GM12878 (cell line): ENCODE measurements at regions of chr18 and their contacts with region 1.

Region 1: DNA sequence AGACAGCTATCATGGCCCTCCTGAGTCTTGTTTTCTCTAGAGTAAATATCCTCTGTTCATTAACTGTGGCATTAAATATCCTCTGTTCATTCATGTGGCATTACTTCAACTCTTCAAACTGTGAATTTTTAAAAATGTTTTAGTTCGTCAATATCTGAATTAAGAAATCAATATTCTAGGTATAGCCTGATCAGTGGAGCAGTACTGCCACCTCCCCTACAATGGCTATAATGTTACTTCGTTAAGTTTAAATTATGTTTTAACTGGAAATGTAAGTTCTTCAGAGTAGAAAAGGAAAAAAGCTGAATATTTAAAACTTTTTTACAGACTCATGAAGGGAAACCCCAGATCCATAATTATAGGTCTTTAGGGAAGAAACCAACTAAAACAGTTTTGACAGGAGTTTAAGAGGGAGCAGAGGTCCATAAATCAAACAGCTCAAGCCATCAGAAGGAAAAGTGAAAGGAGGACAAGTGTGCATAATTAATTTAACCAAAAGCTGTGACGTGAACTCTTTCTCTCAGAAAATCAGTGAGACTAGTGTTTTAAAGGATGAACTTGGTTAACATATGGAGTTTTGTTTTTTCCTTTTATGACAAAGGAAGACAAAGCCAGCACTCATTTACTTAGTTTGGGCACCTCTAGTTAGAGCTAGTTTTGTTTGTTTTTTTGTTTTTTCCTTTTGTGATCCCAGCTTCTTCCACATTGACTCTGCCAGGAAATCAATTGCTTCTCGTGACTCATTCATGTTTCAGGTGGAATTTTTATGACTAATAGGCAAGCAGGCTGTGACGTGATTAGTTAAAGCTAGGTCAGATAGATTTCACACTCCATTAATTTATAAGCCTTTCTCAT is 44.9 kb downstream of the RBBP8 start:
- DNase-seq: no peak
- ATAC-seq: peak; percentile 82
- H3K4me3 ChIP-seq: no peak overlapping the region
- H3K27ac ChIP-seq: peak overlapping the region; percentile 37; the same call in 1 of the 2 replicates
- H3K4me1 ChIP-seq: no peaks in the 10 kb centered on the region
- H3K27me3 ChIP-seq: no peaks in the 10 kb centered on the region
- CTCF ChIP-seq: no peak; a peak in 1 of 6 replicates
- EP300 ChIP-seq: no peak
- POLR2A ChIP-seq: no peak
- RAD21 ChIP-seq: peak; percentile 5; the same call in 1 of the 2 replicates

Region 2: GRCh38 chr18:22813648-22814328 is 164.3 kb before region 1 on chr18:
- CTCF ChIA-PET with region 1: interaction called, 83 read pairs
- POLR2A ChIA-PET with region 1: interaction called, 3 read pairs
- RAD21 ChIA-PET with region 1: interaction called, 38 read pairs
- SMC1A ChIA-PET with region 1: interaction called, 26 read pairs
- in situ Hi-C with region 1: no loop called
- intact Hi-C with region 1: loop called (anchors 1 kb)
- DNase-seq: no peak
- ATAC-seq: peak; percentile 78
- H3K4me3 ChIP-seq: no peak overlapping the region
- H3K27ac ChIP-seq: no peak overlapping the region
- H3K4me1 ChIP-seq: no peaks in the 10 kb centered on the region
- H3K27me3 ChIP-seq: no peaks in the 10 kb centered on the region
- CTCF ChIP-seq: peak; percentile 48 to 79 (median 65); a peak in 5 of 6 replicates
- EP300 ChIP-seq: no peak
- POLR2A ChIP-seq: no peak
- RAD21 ChIP-seq: peak; percentile 98

Region 3: GRCh38 chr18:22846088-22846683 is 131.9 kb before region 1 on chr18:
- CTCF ChIA-PET with region 1: interaction called, 11 read pairs
- POLR2A ChIA-PET with region 1: interaction called, 3 read pairs
- RAD21 ChIA-PET with region 1: interaction called, 15 read pairs
- SMC1A ChIA-PET with region 1: interaction called, 9 read pairs
- in situ Hi-C with region 1: no loop called
- intact Hi-C with region 1: no loop called
- DNase-seq: no peak
- ATAC-seq: 0 out of 3 replicates have a peak, but pooled peaks have one; percentile 38
- H3K4me3 ChIP-seq: no peak overlapping the region
- H3K27ac ChIP-seq: no peak overlapping the region
- H3K4me1 ChIP-seq: 0 out of 2 replicates have a peak, but pooled peaks cover 3% of the 10 kb centered on the region
- H3K27me3 ChIP-seq: no peaks in the 10 kb centered on the region
- CTCF ChIP-seq: peak; percentile 16 to 35 (median 33); a peak in 4 of 6 replicates
- EP300 ChIP-seq: no peak
- POLR2A ChIP-seq: no peak
- RAD21 ChIP-seq: peak; percentile 42

Region 4: DNA sequence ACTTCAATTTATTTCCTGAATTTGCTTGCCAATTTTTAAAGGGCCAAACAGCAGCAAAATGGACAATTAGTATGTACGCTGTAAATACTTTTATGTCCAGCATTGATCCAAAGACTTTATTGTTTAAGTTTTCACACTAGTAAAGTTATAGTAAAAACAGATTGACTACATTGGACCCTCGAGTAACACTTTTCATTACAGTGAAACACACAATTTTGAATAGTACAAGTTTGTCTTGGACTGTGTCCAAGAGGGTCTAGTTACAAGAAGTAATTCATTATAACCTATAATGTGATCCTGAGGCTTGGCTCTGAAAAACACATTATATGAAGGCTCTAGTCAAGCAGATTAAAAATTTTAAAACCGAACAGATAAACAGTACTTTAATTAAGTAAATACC is 56.3 kb before region 1 on chr18:
- CTCF ChIA-PET with region 1: interaction called, 10 read pairs
- POLR2A ChIA-PET with region 1: interaction called, 3 read pairs
- RAD21 ChIA-PET with region 1: interaction called, 5 read pairs
- SMC1A ChIA-PET with region 1: interaction called, 5 read pairs
- in situ Hi-C with region 1: no loop called
- intact Hi-C with region 1: no loop called
- DNase-seq: no peak
- ATAC-seq: no peak
- H3K4me3 ChIP-seq: no peak overlapping the region
- H3K27ac ChIP-seq: no peak overlapping the region
- H3K4me1 ChIP-seq: no peaks in the 10 kb centered on the region
- H3K27me3 ChIP-seq: no peaks in the 10 kb centered on the region
- CTCF ChIP-seq: no peak
- EP300 ChIP-seq: no peak
- POLR2A ChIP-seq: no peak
- RAD21 ChIP-seq: no peak

Region 5: DNA sequence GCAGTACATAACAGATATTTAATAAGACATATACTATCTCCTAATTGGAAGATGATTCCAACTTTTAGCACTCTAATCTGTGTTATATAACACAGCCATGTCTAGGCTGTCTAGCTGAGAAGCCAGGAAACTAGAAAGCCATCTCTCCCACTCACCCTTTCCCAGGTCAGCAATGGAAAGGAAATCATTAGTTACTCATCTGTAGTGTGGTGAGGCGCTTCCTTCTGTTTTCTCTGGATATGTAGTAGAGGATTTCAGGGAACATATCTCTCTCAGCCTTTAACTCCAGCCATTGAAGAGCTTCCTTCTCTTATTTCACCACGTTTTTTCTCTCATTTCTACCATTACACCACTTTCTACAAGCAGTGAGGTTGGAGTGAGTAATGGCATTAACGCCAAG is 25.5 kb before region 1 on chr18:
- CTCF ChIA-PET with region 1: interaction called, 15 read pairs
- POLR2A ChIA-PET with region 1: no interaction called
- RAD21 ChIA-PET with region 1: interaction called, 4 read pairs
- SMC1A ChIA-PET with region 1: interaction called, 21 read pairs
- in situ Hi-C with region 1: no loop called
- intact Hi-C with region 1: no loop called
- DNase-seq: no peak
- ATAC-seq: no peak
- H3K4me3 ChIP-seq: no peak overlapping the region
- H3K27ac ChIP-seq: no peak overlapping the region
- H3K4me1 ChIP-seq: no peaks in the 10 kb centered on the region
- H3K27me3 ChIP-seq: no peaks in the 10 kb centered on the region
- CTCF ChIP-seq: no peak
- EP300 ChIP-seq: no peak
- POLR2A ChIP-seq: no peak
- RAD21 ChIP-seq: no peak

Region 6: DNA sequence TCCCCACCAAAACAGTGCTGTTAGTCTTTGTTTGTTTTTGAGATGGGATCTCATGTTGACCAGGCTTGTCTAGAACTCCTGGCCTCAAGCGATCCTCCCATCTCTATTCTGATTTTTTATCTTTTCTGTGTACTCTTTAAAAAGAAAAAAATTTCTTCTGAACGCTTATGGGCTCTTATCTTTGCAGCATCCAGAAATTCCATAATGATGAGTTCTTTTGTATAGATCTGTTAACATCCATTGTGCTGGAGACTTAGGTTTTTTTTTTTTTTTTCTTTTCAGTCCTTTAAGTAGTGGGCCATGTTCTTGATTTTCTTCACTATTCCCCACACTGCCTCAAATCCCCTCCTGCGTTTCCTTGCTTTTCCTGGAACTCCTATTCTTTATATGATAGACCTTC is 14.0 kb before region 1 on chr18:
- CTCF ChIA-PET with region 1: interaction called, 18 read pairs
- POLR2A ChIA-PET with region 1: interaction called, 8 read pairs
- RAD21 ChIA-PET with region 1: interaction called, 3 read pairs
- SMC1A ChIA-PET with region 1: interaction called, 21 read pairs
- in situ Hi-C with region 1: no loop called
- intact Hi-C with region 1: no loop called
- DNase-seq: no peak
- ATAC-seq: no peak
- H3K4me3 ChIP-seq: no peak overlapping the region
- H3K27ac ChIP-seq: no peak overlapping the region
- H3K4me1 ChIP-seq: no peaks in the 10 kb centered on the region
- H3K27me3 ChIP-seq: no peaks in the 10 kb centered on the region
- CTCF ChIP-seq: no peak
- EP300 ChIP-seq: no peak
- POLR2A ChIP-seq: no peak
- RAD21 ChIP-seq: no peak